Heart left ventricle (tissue), 16 donors: ENCODE measurements at regions of chr17 and their contacts with region 1.

Region 1: DNA sequence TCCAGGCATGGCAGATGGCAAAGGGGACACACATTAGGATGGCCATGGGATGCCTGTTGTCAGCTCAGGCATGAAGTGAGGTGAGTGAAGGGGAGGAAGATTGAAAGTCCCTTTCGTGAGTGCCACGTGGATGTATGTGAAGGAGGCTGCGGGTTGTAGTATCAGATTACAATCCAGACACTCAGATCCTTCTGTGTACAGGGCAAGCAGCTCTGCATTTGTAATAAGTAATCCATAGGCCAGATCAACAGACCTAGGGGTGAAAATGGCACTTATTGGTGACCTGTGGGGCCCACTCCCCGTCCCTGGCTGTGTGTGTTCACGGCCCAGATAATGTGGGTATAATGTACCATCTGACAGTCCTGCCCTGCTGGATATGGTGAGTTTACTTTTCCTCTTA is 159.5 kb downstream of the DNAH9 start:
- DNase-seq: no peak
- ATAC-seq: no peak
- H3K4me3 ChIP-seq: no peak overlapping the region
- H3K27ac ChIP-seq: no peak overlapping the region
- H3K4me1 ChIP-seq: no peaks in the 10 kb centered on the region
- H3K27me3 ChIP-seq: no peaks in the 10 kb centered on the region
- CTCF ChIP-seq: no peak
- POLR2A ChIP-seq: no peak

Region 2: GRCh38 chr17:11814655-11815262 is 56.9 kb after region 1 on chr17:
- intact Hi-C with region 1: loop called in 1 of 10 experiments (anchors 10 kb)
- DNase-seq: no peak
- ATAC-seq: peak in 1 of 4 donors; percentile 51
- H3K4me3 ChIP-seq: no peak overlapping the region
- H3K27ac ChIP-seq: no peak overlapping the region
- H3K4me1 ChIP-seq: peaks cover 0 to 28% (median 4%) of the 10 kb centered on the region in 12 donors
- H3K27me3 ChIP-seq: no peaks in the 10 kb centered on the region
- CTCF ChIP-seq: no peak
- POLR2A ChIP-seq: no peak